ENCODE measurements at regions of chr17 and their contacts with region 1.

Region 1: GRCh38 chr17:59829217-59830006 is 63.3 kb downstream of the TUBD1 start:
- DNase-seq: peak; percentile 66 to 100
- H3K4me3 ChIP-seq: peak overlapping the region; percentile 51
- H3K27ac ChIP-seq: peak overlapping the region; percentile 99
- H3K4me1 ChIP-seq: peaks cover 90% of the 10 kb centered on the region
- H3K27me3 ChIP-seq: no peaks in the 10 kb centered on the region
- CTCF ChIP-seq: no peak

Region 2: DNA sequence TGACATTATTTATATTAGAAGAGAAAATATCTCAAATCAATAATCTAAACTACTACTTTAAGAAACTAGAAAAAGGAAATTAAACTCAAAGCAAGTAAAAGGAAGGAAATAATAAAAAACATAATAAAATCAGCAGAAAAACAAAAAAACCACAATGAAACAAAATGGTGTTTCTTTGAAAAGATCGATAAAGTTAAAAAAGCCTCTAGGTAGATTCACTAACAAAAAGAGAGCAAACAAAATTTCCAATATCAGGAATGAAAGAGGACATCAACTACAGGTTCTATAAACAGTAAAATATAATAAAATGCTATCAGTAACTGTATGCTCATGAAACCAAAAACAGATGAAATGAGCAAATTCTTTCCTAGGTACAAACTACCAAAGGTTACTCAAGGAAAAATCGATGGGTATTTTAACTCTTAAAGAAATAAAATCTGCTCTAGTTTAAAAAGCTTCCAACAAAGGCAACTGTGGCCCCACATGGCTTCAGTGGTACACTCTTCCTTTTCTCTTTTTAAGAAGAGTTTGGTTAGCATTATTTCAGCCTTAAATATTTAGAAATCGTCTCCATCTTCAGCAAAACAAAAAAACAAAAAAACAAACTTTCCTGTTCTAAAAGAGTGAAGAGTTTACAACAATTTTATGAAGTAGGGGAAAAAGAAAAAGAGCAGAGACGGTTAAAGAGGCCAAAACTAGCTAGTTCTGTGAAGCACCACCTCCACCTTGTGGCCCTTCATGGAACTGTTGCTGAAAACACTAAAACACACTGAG is 824.9 kb before region 1 on chr17:
- CTCF ChIA-PET with region 1: no interaction called
- POLR2A ChIA-PET with region 1: no interaction called
- intact Hi-C with region 1: no loop called
- DNase-seq: peak in 1 of 2 experiments; percentile 43
- H3K4me3 ChIP-seq: no peak overlapping the region
- H3K27ac ChIP-seq: no peak overlapping the region
- H3K4me1 ChIP-seq: no peaks in the 10 kb centered on the region
- H3K27me3 ChIP-seq: no peaks in the 10 kb centered on the region
- CTCF ChIP-seq: peak; percentile 97

Region 3: DNA sequence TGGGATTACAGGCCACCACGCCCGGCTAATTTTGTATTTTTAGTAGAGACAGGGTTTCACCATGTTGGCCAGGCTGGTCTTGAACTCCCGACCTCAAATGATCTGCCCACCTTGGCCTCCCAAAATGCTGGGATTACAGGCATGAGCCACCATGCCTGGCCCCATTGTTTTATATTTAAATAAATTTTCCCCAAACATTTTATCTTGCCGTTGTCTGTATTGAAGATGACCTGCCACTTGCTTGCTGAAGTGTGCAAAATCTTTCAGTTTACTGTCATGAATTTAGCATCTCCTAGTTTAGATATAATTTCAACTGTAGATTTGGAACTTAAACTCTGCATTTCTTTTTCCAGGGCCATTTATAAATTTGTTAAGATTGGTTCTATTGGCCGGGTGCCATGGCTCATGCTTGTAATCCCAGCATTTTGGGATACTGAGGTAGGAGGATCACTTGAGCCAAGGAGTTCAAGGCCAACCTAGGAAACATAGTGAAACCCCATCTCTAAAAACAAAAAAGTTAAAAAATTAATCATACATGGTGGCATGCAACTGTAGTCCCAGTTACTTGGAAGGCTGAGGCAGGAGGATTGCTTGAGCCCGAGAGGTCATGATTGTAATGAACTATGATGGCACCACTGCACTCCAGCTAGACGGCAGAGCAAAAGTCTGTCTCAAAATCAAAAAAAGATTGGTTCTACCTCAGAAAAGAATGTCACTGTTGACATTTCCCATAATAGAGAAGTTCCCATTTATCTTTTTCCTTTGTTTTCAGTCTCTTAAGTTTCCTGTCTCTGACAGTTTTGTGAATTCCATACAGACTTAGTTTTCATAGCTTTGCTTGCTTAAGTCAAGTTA is 37.6 kb before region 1 on chr17:
- CTCF ChIA-PET with region 1: interaction called, 3 read pairs
- POLR2A ChIA-PET with region 1: interaction called, 34 read pairs
- intact Hi-C with region 1: no loop called
- DNase-seq: peak in 1 of 2 experiments; percentile 39
- H3K4me3 ChIP-seq: no peak overlapping the region
- H3K27ac ChIP-seq: peak overlapping the region; percentile 17
- H3K4me1 ChIP-seq: peaks cover 34% of the 10 kb centered on the region
- H3K27me3 ChIP-seq: no peaks in the 10 kb centered on the region
- CTCF ChIP-seq: no peak

Region 4: GRCh38 chr17:59846394-59847165 is 17.2 kb after region 1 on chr17:
- CTCF ChIA-PET with region 1: no interaction called
- POLR2A ChIA-PET with region 1: interaction called, 23 read pairs
- intact Hi-C with region 1: no loop called
- DNase-seq: peak; percentile 75 to 100
- H3K4me3 ChIP-seq: peak overlapping the region; percentile 46; the same call in 1 of the 2 replicates
- H3K27ac ChIP-seq: peak overlapping the region; percentile 99
- H3K4me1 ChIP-seq: peaks cover 76% of the 10 kb centered on the region
- H3K27me3 ChIP-seq: no peaks in the 10 kb centered on the region
- CTCF ChIP-seq: no peak

Region 5: DNA sequence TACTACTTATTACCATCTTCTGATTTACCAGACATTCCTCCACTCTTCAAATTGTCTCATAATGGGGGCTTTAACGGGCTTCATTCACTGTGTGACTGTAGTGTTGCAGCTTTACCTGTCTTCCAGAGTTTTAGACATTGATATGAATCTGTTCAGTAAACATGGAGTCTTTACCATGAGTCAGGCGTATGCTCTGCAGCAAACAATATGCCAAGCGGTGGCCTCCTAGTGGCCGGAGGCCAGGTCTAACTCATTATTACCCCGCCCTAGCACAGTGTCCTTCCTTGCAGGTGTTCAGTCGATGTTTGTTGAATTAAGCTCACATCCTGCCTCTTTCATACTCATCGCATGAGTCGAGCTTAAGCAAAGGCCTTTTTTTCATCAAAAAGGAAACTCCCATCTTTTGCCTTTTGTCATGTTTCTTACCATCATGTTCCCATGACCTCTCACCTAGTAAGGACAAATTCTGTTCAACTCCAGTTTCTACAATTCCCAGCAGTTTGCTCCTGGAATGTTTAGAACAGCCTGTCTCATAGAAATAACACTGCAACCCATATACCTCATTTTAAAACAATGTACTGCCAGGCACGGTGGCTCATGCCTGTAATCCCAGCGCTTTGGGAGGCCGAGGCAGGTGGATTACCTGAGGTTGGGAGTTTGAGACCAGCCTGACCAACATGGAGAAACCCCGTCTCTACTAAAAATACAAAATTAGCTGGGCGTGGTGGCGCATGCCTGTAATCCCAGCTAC is 23.9 kb after region 1 on chr17:
- CTCF ChIA-PET with region 1: interaction called, 6 read pairs
- POLR2A ChIA-PET with region 1: interaction called, 8 read pairs
- intact Hi-C with region 1: loop called (anchors 1 kb)
- DNase-seq: peak; percentile 92 to 100
- H3K4me3 ChIP-seq: peak overlapping the region; percentile 12; the same call in 1 of the 2 replicates
- H3K27ac ChIP-seq: peak overlapping the region; percentile 98
- H3K4me1 ChIP-seq: peaks cover 91% of the 10 kb centered on the region
- H3K27me3 ChIP-seq: no peaks in the 10 kb centered on the region
- CTCF ChIP-seq: peak; percentile 83

Region 6: GRCh38 chr17:59876107-59876506 is 46.7 kb after region 1 on chr17:
- CTCF ChIA-PET with region 1: no interaction called
- POLR2A ChIA-PET with region 1: no interaction called
- intact Hi-C with region 1: no loop called
- DNase-seq: no peak
- H3K4me3 ChIP-seq: no peak overlapping the region
- H3K27ac ChIP-seq: no peak overlapping the region
- H3K4me1 ChIP-seq: no peaks in the 10 kb centered on the region
- H3K27me3 ChIP-seq: no peaks in the 10 kb centered on the region
- CTCF ChIP-seq: no peak

Region 7: DNA sequence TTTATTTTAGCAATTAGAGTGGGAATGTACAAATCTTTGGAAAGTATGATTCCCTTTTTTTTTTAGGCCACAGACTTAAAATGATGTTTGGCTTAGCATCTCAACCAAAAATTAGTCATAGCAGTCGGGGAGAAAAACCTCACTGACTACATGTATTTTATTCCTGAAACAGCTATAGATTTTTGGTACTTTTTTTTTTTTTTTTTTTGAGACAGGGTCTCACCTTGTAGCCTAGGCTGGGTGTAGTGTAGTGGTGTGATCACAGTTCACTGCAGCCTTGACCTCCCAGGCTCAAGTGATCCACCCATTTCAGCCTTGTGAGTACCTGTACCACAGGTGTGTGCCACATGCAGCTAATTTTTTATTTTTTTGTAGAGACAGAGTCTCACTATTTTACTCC is 111.7 kb after region 1 on chr17:
- CTCF ChIA-PET with region 1: no interaction called
- POLR2A ChIA-PET with region 1: interaction called, 28 read pairs
- intact Hi-C with region 1: no loop called
- DNase-seq: no peak
- H3K4me3 ChIP-seq: no peak overlapping the region
- H3K27ac ChIP-seq: peak overlapping the region; percentile 28
- H3K4me1 ChIP-seq: no peaks in the 10 kb centered on the region
- H3K27me3 ChIP-seq: no peaks in the 10 kb centered on the region
- CTCF ChIP-seq: no peak